ENCODE measurements at regions of chr16 and their contacts with region 1.

Region 1: DNA sequence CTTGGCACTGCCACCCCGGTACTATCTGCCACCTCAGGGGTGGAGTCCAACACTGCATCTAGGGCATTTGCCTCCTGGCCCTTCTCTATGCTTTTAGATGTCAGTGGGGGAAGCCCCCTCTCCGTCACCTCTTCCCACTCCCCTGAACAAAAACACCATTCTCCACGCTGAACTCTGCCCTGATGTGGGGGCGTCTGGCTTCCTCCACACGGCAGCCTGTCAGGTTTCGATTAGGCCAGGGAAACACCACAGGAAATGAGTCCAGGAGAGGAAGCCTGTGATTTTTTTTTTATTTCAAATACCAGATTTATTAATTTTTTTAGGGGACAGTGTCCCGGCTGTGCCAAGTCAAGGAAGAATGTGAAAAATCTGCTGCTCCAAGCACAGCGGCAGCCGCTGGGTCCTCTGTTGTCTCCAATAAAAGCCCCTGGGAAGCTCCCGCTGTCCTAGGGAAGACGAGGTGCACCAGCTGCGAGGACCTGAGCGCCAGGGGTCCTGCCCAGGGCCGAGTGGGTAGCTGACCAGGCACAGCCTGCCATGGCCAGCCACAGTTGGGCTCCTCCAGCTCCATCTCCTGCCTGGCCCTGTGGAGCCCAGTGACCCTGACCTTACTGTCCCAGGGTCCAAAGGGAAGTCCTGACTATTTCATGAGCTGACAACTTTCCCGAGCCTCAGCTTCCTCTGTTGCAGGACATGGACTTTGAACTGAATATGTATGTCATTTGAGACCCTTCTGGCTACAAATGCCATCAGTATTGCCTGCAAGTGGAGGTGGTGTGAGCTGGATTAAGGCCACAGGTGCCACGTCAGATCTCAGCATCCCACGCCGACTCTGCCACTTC is 336.7 kb downstream of the FOXL1 start:
- DNase-seq: peak; percentile 88
- H3K4me3 ChIP-seq: no peak overlapping the region
- H3K27ac ChIP-seq: peak overlapping the region; percentile 56
- H3K4me1 ChIP-seq: peaks cover 19% of the 10 kb centered on the region
- H3K27me3 ChIP-seq: no peaks in the 10 kb centered on the region
- CTCF ChIP-seq: no peak
- POLR2A ChIP-seq: no peak

Region 2: DNA sequence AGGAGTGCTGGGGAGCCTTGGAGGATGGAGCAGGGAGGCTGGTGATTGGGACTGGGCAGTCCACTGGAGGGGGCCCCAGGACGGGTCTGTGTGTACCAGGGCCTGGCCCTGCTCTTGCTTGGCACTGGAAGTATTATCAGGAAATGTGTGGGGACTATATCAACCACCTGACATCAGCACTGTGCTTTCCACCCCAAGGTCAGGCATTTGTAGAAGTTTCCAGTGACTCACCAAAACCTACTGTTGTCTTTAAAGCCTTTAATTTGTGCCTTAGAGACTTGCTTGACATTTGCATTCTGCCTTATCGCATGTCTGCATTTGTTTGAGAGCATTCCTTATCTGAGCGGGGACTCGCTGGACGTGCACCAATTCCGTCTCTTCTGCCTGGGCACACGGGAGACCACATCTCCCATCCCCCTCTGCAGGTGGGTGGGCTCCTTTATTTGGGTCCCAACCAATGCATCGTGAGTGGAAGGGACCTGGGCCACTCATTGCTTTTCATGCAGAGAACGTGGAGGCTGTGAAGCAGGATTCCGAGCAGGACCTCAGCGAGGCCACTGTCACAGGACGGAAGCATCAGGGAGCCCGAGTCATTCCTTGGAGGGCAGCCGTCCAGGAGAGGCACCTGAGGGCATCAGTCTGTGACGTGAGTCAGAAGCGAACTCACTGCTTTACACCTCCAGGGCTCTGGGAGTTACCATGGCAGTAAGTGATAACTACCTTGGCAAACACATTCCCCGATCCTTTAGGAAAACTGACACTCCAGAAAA is 13.4 kb before region 1 on chr16:
- CTCF ChIA-PET with region 1: no interaction called
- POLR2A ChIA-PET with region 1: no interaction called
- dilution Hi-C with region 1: no loop called
- intact Hi-C with region 1: loop called (anchors 1 kb)
- DNase-seq: peak; percentile 94
- H3K4me3 ChIP-seq: no peak overlapping the region
- H3K27ac ChIP-seq: peak overlapping the region; percentile 53
- H3K4me1 ChIP-seq: peaks cover 24% of the 10 kb centered on the region
- H3K27me3 ChIP-seq: no peaks in the 10 kb centered on the region
- CTCF ChIP-seq: peak in 1 of 2 donors; percentile 49
- POLR2A ChIP-seq: no peak

Region 3: DNA sequence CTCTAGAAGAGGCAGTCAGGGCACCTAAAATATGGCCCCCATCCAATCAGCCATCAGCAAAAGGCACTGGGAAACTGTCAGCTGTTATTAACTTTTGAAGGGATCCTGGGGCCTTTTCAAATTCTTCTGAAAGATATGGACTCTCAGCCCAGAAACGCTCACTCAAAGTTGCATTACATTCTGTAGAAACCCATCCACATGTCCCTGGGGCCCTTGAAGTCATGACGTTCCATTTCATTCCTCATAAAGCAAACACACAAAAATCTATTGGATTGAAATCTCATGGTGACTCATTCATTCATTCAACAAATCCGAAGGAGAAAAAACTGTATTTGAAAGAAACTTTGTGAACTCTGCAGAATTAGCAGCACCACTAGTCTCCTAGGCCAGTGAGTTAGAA is 186.8 kb after region 1 on chr16:
- CTCF ChIA-PET with region 1: no interaction called
- POLR2A ChIA-PET with region 1: no interaction called
- dilution Hi-C with region 1: no loop called
- intact Hi-C with region 1: no loop called
- DNase-seq: no peak
- H3K4me3 ChIP-seq: no peak overlapping the region
- H3K27ac ChIP-seq: no peak overlapping the region
- H3K4me1 ChIP-seq: no peaks in the 10 kb centered on the region
- H3K27me3 ChIP-seq: peaks cover 13 to 14% of the 10 kb centered on the region in 2 experiments
- CTCF ChIP-seq: no peak
- POLR2A ChIP-seq: no peak